Cardiac septum (tissue), 1 donor: ENCODE measurements at regions of chr11 and their contacts with region 1.

Region 1: GRCh38 chr11:22787551-22788162 is 41.9 kb downstream of the SVIP start:
- DNase-seq: no peak

Region 2: DNA sequence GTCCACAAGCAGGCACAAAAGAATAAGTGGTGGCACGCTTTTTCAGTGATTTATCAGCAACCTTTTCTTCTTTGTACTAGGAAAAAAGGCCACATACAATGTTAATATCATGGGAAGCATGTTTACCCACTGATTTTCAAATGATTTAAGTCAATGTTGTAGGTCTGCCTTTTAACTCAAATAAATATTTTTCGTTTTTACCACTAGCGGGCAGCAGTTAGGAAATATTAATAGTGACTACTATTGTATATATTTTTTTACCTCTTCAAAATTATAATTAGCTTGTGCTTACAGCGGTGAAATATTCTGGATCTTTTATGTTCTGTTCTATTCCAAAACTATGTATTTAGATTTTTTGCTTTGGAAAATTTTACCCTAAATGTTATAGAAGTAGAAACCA is 455.9 kb before region 1 on chr11:
- intact Hi-C with region 1: loop called (anchors 5 kb)
- DNase-seq: no peak

Region 3: GRCh38 chr11:22920939-22921565 is 133.4 kb after region 1 on chr11:
- intact Hi-C with region 1: no loop called
- DNase-seq: no peak